ENCODE measurements at regions of chr5 and their contacts with region 1.

Region 1: DNA sequence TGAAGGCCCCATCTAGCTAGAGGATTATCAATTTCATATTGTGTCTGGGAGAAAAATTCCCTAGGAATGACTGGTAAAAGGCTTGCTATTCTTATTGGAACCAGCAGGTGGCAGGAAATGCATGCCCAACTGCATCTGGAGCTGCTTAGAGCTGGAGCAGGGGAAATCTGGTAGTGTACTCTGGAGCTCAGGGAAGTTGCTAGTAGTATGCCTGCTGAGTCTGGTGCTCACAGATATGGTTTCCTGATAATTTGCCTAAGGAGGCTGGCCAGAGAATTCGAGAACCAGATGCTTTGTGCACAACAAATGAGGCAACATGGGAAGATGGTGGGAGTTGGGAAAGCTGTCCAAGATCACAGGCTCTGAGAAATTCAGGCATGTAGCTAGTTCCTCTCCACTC is 53.7 kb downstream of the G3BP1 start:
- DNase-seq: peak in 1 of 2 donors; percentile 46
- ATAC-seq: peak; percentile 63 to 85 (median 74)
- H3K4me3 ChIP-seq: no peak overlapping the region
- H3K27ac ChIP-seq: no peak overlapping the region
- H3K4me1 ChIP-seq: no peaks in the 10 kb centered on the region
- H3K27me3 ChIP-seq: no peaks in the 10 kb centered on the region
- CTCF ChIP-seq: peak; percentile 77

Region 2: DNA sequence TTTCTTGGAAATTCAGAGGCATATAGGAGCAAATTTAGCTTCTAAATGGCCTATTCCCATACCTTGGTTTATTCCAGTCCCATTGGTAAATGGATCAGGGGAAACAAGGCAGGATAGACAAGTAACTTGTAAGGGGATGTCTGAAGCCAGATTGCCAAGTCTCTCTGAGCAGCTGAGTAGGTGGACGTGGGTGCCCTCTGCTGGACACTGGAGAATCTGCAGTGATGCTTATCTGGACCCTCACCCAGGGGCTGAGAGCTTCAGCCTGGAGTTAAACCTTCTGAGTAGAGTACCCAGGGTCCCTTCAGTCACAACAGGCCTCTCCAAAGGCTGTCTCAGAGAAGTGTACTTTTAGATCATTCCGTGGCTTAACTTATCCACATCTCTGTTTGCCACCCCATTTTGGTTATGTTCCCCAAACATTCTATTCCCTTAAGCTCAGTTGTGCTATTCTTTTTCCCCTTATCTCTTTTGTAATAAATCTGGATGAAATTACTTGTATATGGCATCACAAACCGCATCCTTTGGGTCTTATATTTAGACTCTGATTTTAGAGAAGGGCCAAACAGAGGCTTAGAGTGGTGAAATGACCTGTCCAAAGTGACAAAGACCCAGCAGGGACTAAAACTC is 317.5 kb after region 1 on chr5:
- intact Hi-C with region 1: loop called (anchors 1 to 2 kb)
- DNase-seq: peak; percentile 38 to 62
- ATAC-seq: peak; percentile 64 to 80 (median 74)
- H3K4me3 ChIP-seq: no peak overlapping the region
- H3K27ac ChIP-seq: no peak overlapping the region
- H3K4me1 ChIP-seq: no peaks in the 10 kb centered on the region
- H3K27me3 ChIP-seq: no peaks in the 10 kb centered on the region
- CTCF ChIP-seq: peak; percentile 80

Region 3: DNA sequence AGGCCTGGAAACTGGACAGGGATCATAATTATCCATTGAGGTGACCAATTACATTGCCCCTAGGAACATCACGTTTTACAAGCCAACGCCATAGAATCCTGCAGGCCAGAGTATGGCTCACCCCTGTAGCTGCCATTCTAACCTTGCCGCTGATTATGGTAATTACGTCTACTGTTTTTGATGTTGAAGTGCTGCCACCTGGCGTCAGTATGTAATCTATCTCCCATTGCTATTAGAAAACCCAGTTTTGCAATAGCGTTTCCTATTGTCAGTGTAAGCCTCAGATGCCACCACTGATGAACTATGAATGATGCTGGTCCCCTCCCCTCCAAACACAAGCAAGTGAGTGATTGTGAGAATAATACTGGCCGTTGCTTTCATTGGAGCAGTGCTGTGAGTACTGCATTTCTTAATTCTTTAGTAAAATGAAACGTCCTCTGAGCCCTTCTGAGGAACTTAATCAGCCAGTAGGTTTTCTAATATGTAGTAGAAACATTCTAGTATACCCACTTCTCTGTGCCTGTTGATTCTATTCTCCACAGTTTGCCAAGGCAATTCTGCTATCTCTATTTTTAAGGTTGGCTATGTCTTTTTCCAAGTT is 680.1 kb after region 1 on chr5:
- intact Hi-C with region 1: loop called (anchors 5 to 10 kb)
- DNase-seq: peak in 1 of 2 donors; percentile 13
- ATAC-seq: peak in 2 of 4 donors; percentile 26 to 71
- H3K4me3 ChIP-seq: no peak overlapping the region
- H3K27ac ChIP-seq: no peak overlapping the region
- H3K4me1 ChIP-seq: no peaks in the 10 kb centered on the region
- H3K27me3 ChIP-seq: peaks cover 0 to 4% (median 0%) of the 10 kb centered on the region in 3 donors
- CTCF ChIP-seq: peak; percentile 39